ENCODE measurements at regions of chr15 and their contacts with region 1.

Region 1: GRCh38 chr15:81000624-81001151 is at the start of gene TLNRD1:
- DNase-seq: peak; percentile 92
- H3K4me3 Mint-ChIP-seq: peak within 1 kb of the TSS; percentile 86
- H3K27ac Mint-ChIP-seq: peak within 1 kb of the TSS; percentile 94
- H3K4me1 Mint-ChIP-seq: peaks cover 40% of the 10 kb centered on the region
- H3K27me3 Mint-ChIP-seq: no peaks in the 10 kb centered on the region
- total RNA-seq, gene TLNRD1: 15.9 to 16.6 TPM

Region 2: DNA sequence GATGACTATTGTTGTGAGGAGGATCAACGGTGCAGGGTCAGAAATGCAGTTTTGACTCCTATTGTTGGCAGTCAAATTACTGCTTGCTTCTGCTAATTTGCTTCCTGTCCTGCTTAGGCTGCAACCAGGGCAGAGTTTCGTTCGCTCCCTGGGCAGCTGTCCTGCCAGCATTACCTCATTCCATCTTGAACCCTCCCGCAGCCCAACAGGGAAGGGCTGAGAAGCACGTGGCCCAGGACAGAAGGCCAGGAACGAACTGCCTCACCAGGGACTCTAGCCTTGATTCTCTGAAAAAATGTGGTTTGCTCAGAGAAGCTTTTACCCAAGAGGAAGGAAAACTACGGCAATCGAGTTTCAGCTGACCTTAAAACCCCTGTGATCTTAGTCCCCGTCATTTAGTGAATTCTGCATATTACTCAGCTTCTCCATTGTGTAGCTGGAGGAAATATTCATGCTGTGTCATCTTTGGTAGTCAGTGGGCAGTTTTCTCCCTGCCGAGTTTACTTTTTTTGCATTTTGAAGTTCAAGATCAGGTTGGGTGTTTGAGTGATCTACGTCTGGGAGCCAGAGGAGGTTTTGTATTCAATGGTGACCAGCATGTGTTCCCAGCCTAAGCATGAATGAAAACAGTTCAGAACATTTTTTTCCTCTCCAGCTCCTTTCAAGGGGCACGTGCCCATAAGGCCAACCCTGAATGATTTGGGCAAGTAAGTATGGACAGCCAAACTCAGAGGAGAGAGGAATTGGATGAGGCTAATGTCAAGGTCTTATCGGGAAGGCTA is 23.0 kb after region 1 on chr15:
- CTCF ChIA-PET with region 1: interaction called, 3 read pairs
- intact Hi-C with region 1: loop called (anchors 1 kb)
- DNase-seq: peak; percentile 39
- H3K4me3 Mint-ChIP-seq: peak overlapping the region; percentile 20
- H3K27ac Mint-ChIP-seq: peak overlapping the region; percentile 64
- H3K4me1 Mint-ChIP-seq: peaks cover 24% of the 10 kb centered on the region
- H3K27me3 Mint-ChIP-seq: no peaks in the 10 kb centered on the region

Region 3: GRCh38 chr15:81106560-81106959 is 105.9 kb after region 1 on chr15:
- CTCF ChIA-PET with region 1: interaction called, 4 read pairs
- intact Hi-C with region 1: loop called (anchors 1 kb)
- DNase-seq: peak; percentile 55
- H3K4me3 Mint-ChIP-seq: no peak overlapping the region
- H3K27ac Mint-ChIP-seq: no peak overlapping the region
- H3K4me1 Mint-ChIP-seq: peaks cover 1% of the 10 kb centered on the region
- H3K27me3 Mint-ChIP-seq: peaks cover 8% of the 10 kb centered on the region

Region 4: GRCh38 chr15:81155375-81156218 is 154.9 kb after region 1 on chr15:
- CTCF ChIA-PET with region 1: no interaction called
- intact Hi-C with region 1: loop called (anchors 1 kb)
- DNase-seq: peak; percentile 35
- H3K4me3 Mint-ChIP-seq: no peak overlapping the region
- H3K27ac Mint-ChIP-seq: no peak overlapping the region
- H3K4me1 Mint-ChIP-seq: peaks cover under 1% of the 10 kb centered on the region
- H3K27me3 Mint-ChIP-seq: no peaks in the 10 kb centered on the region

Region 5: DNA sequence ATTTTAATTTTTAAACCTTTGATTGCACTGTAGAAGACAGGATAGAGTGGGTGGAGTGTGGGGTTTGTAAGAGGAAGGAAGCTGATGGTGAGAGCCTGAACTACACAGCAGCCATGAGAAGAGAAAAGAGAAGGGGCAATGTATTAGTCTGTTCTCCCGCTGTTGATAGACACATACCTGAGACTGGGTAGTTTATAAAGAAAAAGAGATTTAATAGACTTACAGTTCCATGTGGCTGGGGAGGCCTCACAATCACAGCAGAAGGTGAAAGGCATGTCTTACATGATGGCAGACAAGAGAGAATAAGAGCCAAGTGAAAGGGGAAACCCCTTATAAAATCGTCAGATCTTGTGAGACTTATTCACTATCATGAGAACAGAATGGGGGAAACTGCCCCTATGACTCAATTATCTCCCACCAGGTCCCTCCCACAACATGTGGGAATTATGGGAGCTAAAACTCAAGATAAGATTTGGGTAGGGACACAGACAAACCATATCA is 286.0 kb after region 1 on chr15:
- CTCF ChIA-PET with region 1: no interaction called
- intact Hi-C with region 1: loop called (anchors 2 kb)
- DNase-seq: peak; percentile 52
- H3K4me3 Mint-ChIP-seq: peak overlapping the region; percentile 75
- H3K27ac Mint-ChIP-seq: peak overlapping the region; percentile 95
- H3K4me1 Mint-ChIP-seq: peaks cover 83% of the 10 kb centered on the region
- H3K27me3 Mint-ChIP-seq: no peaks in the 10 kb centered on the region

Region 6: DNA sequence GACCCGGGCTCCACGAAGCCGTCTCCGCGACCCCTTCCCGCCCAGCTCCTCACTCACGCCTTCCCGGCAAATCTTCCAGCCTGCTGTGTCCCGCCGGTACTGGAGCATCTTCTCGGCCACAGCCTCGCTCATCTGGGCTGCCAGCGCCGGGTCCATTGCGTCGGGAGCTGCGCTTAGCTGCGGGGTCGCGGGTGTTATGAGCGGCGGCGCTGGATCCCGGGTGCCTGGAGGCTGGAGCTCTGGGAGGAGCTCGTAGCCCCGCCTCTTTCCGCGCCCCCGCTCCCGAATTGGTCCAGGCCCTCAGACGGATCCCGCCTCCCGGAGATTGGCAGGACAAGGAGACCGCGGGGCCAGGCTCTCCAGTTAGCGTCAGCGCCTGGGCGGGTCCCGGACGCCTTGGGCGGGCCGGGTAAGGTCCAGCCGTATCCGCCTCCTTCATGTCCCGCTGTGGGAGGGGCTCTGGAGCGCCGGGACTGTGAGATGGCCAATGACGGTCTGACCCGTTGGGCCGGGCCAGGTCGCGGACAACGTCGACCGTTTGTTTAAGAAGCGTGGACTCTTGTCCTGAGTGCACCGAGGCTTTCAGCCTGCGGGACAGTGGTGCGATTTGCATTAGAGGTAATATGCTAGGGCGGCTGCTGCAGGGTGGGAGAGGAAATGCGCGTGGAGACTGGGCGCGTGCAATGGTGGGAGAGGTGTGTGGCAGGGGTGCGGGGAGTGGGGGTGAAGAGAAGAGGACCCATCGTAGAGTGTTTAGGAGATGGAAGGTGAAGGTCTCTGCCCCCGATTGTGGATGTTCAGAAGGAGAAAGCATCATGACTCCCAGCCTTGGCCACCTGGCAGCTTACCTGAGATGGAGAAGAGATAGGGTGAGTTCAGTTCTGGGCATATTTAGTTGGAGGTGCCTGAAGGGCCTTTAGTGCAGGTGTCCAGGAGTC is 323.5 kb after region 1 on chr15 and contains the start of gene STARD5:
- CTCF ChIA-PET with region 1: no interaction called
- intact Hi-C with region 1: loop called (anchors 1 kb)
- DNase-seq: peak; percentile 98
- H3K4me3 Mint-ChIP-seq: peak within 1 kb of the TSS; percentile 98
- H3K27ac Mint-ChIP-seq: peak within 1 kb of the TSS; percentile 78
- H3K4me1 Mint-ChIP-seq: peaks cover 38% of the 10 kb centered on the region
- H3K27me3 Mint-ChIP-seq: no peaks in the 10 kb centered on the region
- total RNA-seq, gene STARD5: 10.1 to 11.7 TPM